Thyroid gland (tissue), 4 donors: ENCODE measurements at regions of chr12 and their contacts with region 1.

Region 1: DNA sequence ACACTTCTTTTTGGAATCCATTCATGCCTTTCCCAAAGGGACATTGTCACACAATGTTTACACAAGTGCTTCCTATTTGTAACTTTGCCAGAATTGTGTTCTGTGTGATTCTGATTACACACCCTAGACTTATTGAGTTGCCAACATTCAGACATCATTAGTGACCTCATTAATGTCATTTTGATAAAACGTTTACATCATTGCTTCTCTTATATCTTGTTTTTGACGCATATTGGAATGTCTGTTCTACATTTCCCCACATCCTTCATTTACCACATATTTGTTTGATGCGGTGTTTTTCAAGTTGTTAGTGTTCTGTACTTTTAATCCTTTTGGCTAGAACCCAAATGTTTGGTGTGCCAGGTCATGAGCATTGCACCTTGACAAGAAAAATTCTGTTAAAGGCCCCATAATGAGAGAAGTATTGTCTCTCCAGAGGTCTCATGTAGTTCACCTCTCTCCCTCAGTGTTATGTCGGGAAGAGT is 305.5 kb downstream of the AEBP2 start:
- DNase-seq: no peak
- H3K4me3 ChIP-seq: no peak overlapping the region
- H3K27ac ChIP-seq: peak overlapping the region in 1 of 3 donors; percentile 1
- H3K4me1 ChIP-seq: peaks cover 0 to 19% of the 10 kb centered on the region in 2 donors
- H3K27me3 ChIP-seq: no peaks in the 10 kb centered on the region
- CTCF ChIP-seq: no peak
- POLR2A ChIP-seq: no peak

Region 2: DNA sequence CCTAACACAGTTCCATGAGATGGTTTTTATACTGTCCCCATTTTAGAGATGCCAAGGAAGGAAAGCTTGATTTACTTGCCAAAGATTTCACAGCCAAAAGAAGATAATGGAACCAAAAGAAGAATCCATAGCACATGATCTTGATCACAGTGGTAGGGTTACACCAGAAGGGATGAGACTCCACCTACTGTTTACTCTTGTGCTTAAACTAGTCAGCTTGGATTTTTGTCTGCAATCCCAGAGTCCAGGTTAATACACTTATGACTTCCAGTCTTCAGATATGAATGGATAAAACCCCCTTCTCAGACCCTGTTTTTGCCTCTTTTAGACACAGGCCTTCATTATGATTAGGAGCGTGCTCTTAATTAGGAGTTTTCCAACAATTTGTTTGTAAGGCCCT is 148.7 kb after region 1 on chr12:
- intact Hi-C with region 1: loop called (anchors 10 kb)
- DNase-seq: no peak
- H3K4me3 ChIP-seq: no peak overlapping the region
- H3K27ac ChIP-seq: no peak overlapping the region
- H3K4me1 ChIP-seq: no peaks in the 10 kb centered on the region
- H3K27me3 ChIP-seq: no peaks in the 10 kb centered on the region
- CTCF ChIP-seq: peak in 4 of 6 experiments; percentile 23 to 54 (median 36)
- POLR2A ChIP-seq: no peak